ENCODE measurements at regions of chr15 and their contacts with region 1.

Region 1: DNA sequence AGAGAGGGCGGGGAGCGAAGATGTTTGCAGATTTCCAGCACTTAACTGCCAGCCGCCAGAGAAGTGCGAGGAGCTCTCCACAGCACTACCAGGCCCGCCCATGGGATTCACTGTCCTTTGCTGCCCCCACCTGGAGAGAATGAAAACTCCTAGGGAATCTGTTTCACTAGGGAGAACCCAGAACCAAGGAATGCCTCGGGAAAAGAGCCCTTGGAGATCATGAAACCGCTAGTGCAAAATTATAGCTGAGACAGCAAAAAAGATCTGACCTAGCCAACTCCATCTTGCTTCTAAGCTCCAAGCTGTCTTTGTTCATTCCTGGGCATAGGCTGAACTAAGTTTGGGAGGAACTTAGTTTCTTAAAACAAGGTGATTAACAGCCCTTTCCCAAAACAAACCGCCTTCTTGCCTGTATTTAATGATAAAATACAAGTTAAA is 82.6 kb upstream of the GCNT3 start:
- DNase-seq: peak; percentile 85
- ATAC-seq: peak; percentile 98
- H3K4me3 ChIP-seq: no peak overlapping the region
- H3K27ac ChIP-seq: no peak overlapping the region
- H3K4me1 ChIP-seq: no peaks in the 10 kb centered on the region
- H3K27me3 ChIP-seq: no peaks in the 10 kb centered on the region
- CTCF ChIP-seq: peak; percentile 84

Region 2: DNA sequence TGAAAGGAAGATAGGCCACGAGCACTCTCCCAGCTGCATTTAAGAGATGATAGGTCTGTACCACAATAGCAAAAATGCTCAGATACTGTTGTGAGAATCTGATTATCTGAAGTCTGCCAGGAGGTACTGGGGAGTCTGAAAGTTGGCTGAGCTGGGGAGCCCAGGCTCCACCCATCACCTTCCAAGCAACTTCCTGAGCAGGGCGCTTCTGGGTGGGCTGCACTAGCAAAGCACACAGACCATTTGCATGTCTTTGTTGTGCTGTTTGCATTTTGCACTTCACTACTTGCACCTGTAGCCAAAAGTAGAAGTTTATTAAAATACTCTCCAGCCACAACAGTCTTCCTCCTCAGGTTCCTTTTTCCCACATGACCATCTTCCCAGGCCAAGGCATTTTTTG is 1596.6 kb before region 1 on chr15:
- CTCF ChIA-PET with region 1: interaction called, 12 read pairs
- POLR2A ChIA-PET with region 1: no interaction called
- in situ Hi-C with region 1: no loop called
- intact Hi-C with region 1: no loop called
- DNase-seq: no peak
- ATAC-seq: no peak
- H3K4me3 ChIP-seq: no peak overlapping the region
- H3K27ac ChIP-seq: no peak overlapping the region
- H3K4me1 ChIP-seq: no peaks in the 10 kb centered on the region
- H3K27me3 ChIP-seq: no peaks in the 10 kb centered on the region
- CTCF ChIP-seq: no peak

Region 3: DNA sequence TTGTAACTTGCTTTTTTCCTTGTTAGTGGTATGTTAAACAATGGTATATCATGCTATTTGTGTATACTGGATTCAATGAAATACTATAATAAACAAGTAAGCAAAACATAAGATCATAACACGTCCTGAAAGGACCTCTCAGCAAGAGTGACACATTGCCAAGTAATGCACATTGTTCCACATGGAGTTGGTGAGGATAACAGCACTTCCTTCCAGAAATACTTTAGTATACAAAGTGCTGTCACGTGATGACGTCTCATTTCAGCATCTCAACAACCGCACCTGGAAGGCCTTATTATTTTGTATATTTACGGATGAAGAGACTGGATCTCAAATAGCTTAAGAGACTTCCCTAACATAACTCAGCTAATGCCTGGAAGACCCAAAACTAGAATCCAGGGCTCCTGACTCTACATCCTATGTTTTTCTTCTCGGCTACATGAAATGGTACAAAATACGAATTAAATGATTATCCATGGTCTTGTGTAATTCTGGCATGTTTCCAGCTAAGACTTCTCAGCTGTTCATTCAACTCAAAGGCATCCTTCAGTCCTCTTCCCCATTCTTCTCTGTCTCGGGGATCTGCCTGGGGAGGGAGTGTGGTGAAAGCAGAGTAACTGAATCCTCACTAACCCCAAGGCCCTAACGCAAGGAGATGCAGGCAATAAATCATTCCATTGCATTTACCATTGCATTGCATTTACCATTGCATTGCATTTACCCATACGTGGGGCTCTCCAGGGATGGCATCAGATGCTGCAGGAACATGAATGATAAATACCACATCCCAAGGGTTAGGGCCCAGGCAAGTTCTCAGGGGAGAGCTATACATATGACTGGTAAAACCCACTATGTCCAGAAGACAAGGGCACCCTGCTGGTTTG is 1018.0 kb before region 1 on chr15:
- CTCF ChIA-PET with region 1: no interaction called
- POLR2A ChIA-PET with region 1: no interaction called
- in situ Hi-C with region 1: no loop called
- intact Hi-C with region 1: no loop called
- DNase-seq: no peak
- ATAC-seq: no peak
- H3K4me3 ChIP-seq: no peak overlapping the region
- H3K27ac ChIP-seq: no peak overlapping the region
- H3K4me1 ChIP-seq: no peaks in the 10 kb centered on the region
- H3K27me3 ChIP-seq: no peaks in the 10 kb centered on the region; the same call in 1 of the 2 replicates
- CTCF ChIP-seq: no peak

Region 4: GRCh38 chr15:59622289-59622688 is 93.3 kb after region 1 on chr15:
- CTCF ChIA-PET with region 1: interaction called, 7 read pairs
- POLR2A ChIA-PET with region 1: interaction called, 10 read pairs
- in situ Hi-C with region 1: no loop called
- intact Hi-C with region 1: loop called (anchors 2 kb)
- DNase-seq: peak; percentile 45
- ATAC-seq: peak; percentile 95
- H3K4me3 ChIP-seq: no peak overlapping the region
- H3K27ac ChIP-seq: no peak overlapping the region
- H3K4me1 ChIP-seq: no peaks in the 10 kb centered on the region
- H3K27me3 ChIP-seq: peaks cover 7% of the 10 kb centered on the region; the same call in 1 of the 2 replicates
- CTCF ChIP-seq: peak; percentile 79

Region 5: DNA sequence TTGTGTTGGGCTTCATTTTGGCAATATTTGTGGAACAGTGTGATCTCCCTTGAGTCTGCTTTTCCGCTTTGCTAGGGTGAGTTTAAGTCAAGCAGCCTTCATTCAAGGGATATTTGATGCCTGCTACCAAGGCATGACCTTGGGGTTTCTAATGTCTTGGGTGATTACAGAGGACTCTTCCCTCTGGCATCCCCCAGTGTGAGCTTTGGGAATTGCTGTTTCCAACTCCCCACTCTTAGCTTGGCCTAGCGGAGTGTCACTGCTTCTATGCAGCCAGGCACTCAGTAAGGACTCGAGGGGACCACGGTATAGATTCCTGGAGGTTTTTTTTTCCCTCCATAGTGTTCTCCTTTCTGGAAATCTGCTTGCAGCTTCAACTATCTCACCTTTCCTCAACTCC is 103.7 kb after region 1 on chr15:
- CTCF ChIA-PET with region 1: interaction called, 15 read pairs
- POLR2A ChIA-PET with region 1: no interaction called
- in situ Hi-C with region 1: no loop called
- intact Hi-C with region 1: no loop called
- DNase-seq: no peak
- ATAC-seq: peak; percentile 83
- H3K4me3 ChIP-seq: no peak overlapping the region
- H3K27ac ChIP-seq: no peak overlapping the region
- H3K4me1 ChIP-seq: no peaks in the 10 kb centered on the region
- H3K27me3 ChIP-seq: no peaks in the 10 kb centered on the region
- CTCF ChIP-seq: peak; percentile 72